ENCODE measurements at regions of chr13 and their contacts with region 1.

Region 1: DNA sequence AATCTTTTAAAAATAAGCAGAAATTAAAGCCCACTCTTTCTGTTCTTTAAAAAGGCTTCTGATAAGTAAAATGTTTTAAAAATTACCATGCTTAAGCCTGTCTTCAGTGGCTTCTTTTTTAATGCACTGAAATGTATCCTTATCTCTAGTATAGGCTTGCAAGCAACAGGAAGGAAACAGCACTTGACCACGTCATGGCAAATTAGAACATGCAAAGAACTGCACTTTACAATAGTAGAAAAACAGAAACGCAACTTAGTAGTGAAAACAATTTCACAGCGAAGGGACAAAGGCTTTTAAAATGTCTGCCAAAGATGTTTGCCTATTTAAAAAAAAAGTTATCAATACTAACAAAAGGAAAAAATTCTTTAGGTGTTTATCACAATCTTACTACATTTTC is 36.3 kb downstream of the ELF1 start:
- DNase-seq: peak in 1 of 2 donors; percentile 76
- ATAC-seq: peak; percentile 63 to 87 (median 83)
- H3K4me3 ChIP-seq: peak overlapping the region; percentile 20 to 54 (median 42)
- H3K27ac ChIP-seq: peak overlapping the region; percentile 31 to 91 (median 84)
- H3K4me1 ChIP-seq: peaks cover 7 to 89% (median 75%) of the 10 kb centered on the region in 9 donors
- H3K27me3 ChIP-seq: no peaks in the 10 kb centered on the region
- CTCF ChIP-seq: no peak

Region 2: DNA sequence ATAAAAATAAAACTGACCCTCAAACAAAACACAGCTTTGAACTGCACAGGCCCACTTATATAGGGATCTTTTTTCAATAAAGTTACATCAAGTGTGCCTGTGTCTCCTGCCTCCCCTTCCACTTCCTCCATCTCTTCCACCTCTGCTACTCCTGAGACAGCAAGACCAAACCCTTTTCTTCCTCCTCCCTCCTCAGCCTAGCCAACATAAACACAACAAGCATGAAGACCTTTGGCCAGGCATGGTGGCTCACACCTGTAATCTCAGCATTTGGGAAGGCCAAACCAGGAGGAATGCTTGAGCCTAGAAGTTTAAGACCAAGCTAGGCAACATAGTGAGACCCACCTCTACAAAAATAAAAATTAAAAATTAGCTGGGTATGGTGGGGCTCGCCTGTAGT is 36.3 kb before region 1 on chr13:
- intact Hi-C with region 1: loop called in 2 of 10 experiments (anchors 5 kb)
- DNase-seq: no peak
- ATAC-seq: no peak
- H3K4me3 ChIP-seq: no peak overlapping the region
- H3K27ac ChIP-seq: no peak overlapping the region
- H3K4me1 ChIP-seq: peaks cover 0 to 29% (median 7%) of the 10 kb centered on the region in 9 donors
- H3K27me3 ChIP-seq: no peaks in the 10 kb centered on the region
- CTCF ChIP-seq: no peak

Region 3: GRCh38 chr13:41001695-41002094 is 18.9 kb after region 1 on chr13:
- intact Hi-C with region 1: loop called in 1 of 10 experiments (anchors 1 kb)
- DNase-seq: no peak
- ATAC-seq: no peak
- H3K4me3 ChIP-seq: no peak overlapping the region
- H3K27ac ChIP-seq: no peak overlapping the region
- H3K4me1 ChIP-seq: peaks cover 0 to 85% (median 33%) of the 10 kb centered on the region in 9 donors
- H3K27me3 ChIP-seq: no peaks in the 10 kb centered on the region
- CTCF ChIP-seq: no peak